Natural killer cell (primary cell): ENCODE measurements at regions of chr6 and their contacts with region 1.

Region 1: DNA sequence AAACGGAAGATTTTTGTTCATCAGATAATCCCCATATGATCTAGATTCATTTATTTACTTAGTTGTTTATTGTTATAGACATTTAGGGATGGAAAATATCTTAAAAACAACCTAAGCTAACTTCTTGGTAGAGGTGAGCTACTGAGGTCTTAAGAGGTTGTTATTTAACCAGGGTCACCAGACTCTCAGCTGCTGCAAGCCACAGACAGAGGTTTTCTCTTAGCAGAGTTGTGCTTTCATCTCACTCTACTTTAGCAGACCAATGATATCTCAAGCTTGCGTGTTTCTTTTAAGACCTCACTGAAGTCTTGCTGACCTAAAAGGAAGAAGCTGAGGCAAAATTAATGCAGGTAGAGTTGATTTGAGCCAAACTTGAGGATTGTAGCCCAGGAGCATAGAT is 43.6 kb downstream of the NCOA7 start:
- DNase-seq: peak in 1 of 2 donors; percentile 49
- ATAC-seq: peak; percentile 53 to 75 (median 73)
- H3K4me3 ChIP-seq: no peak overlapping the region
- H3K4me3 Mint-ChIP-seq: peak overlapping the region; percentile 63
- H3K27ac ChIP-seq: peak overlapping the region; percentile 35
- H3K27ac Mint-ChIP-seq: peak overlapping the region; percentile 87 to 94
- H3K4me1 ChIP-seq: peaks cover 31% of the 10 kb centered on the region
- H3K4me1 Mint-ChIP-seq: peaks cover 62% of the 10 kb centered on the region in 2 donors
- H3K27me3 ChIP-seq: no peaks in the 10 kb centered on the region
- H3K27me3 Mint-ChIP-seq: no peaks in the 10 kb centered on the region
- CTCF ChIP-seq: no peak

Region 2: GRCh38 chr6:124560873-124561567 is 1273.3 kb before region 1 on chr6:
- intact Hi-C with region 1: no loop called
- DNase-seq: no peak
- ATAC-seq: no peak
- H3K4me3 ChIP-seq: no peak overlapping the region
- H3K4me3 Mint-ChIP-seq: no peak overlapping the region
- H3K27ac ChIP-seq: no peak overlapping the region
- H3K27ac Mint-ChIP-seq: no peak overlapping the region
- H3K4me1 ChIP-seq: no peaks in the 10 kb centered on the region
- H3K4me1 Mint-ChIP-seq: no peaks in the 10 kb centered on the region
- H3K27me3 ChIP-seq: no peaks in the 10 kb centered on the region
- H3K27me3 Mint-ChIP-seq: no peaks in the 10 kb centered on the region
- CTCF ChIP-seq: no peak

Region 3: DNA sequence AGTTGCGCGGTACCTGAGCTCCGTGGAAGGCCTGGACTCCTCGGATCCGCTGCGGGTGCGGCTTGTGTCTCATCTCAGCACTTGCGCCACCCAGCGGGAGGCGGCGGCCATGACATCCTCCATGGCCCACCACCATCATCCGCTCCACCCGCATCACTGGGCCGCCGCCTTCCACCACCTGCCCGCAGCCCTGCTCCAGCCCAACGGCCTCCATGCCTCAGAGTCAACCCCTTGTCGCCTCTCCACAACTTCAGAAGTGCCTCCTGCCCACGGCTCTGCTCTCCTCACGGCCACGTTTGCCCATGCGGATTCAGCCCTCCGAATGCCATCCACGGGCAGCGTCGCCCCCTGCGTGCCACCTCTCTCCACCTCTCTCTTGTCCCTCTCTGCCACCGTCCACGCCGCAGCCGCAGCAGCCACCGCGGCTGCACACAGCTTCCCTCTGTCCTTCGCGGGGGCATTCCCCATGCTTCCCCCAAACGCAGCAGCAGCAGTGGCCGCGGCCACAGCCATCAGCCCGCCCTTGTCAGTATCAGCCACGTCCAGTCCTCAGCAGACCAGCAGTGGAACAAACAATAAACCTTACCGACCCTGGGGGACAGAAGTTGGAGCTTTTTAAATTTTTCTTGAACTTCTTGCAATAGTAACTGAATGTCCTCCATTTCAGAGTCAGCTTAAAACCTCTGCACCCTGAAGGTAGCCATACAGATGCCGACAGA is 75.0 kb before region 1 on chr6:
- intact Hi-C with region 1: no loop called
- DNase-seq: no peak
- ATAC-seq: peak in 2 of 3 donors; percentile 36 to 55
- H3K4me3 ChIP-seq: no peak overlapping the region
- H3K4me3 Mint-ChIP-seq: no peak overlapping the region
- H3K27ac ChIP-seq: no peak overlapping the region
- H3K27ac Mint-ChIP-seq: no peak overlapping the region
- H3K4me1 ChIP-seq: no peaks in the 10 kb centered on the region
- H3K4me1 Mint-ChIP-seq: no peaks in the 10 kb centered on the region
- H3K27me3 ChIP-seq: peaks cover 8% of the 10 kb centered on the region
- H3K27me3 Mint-ChIP-seq: peaks cover 20 to 33% of the 10 kb centered on the region in 2 donors
- CTCF ChIP-seq: no peak

Region 4: GRCh38 chr6:125790358-125791150 is 43.8 kb before region 1 on chr6 and contains the start of gene NCOA7:
- intact Hi-C with region 1: loop called (anchors 2 kb)
- DNase-seq: peak; percentile 79 to 89
- ATAC-seq: peak; percentile 83 to 92 (median 85)
- H3K4me3 ChIP-seq: peak within 1 kb of the TSS; percentile 78
- H3K4me3 Mint-ChIP-seq: peak within 1 kb of the TSS; percentile 97
- H3K27ac ChIP-seq: peak within 1 kb of the TSS; percentile 92
- H3K27ac Mint-ChIP-seq: peak within 1 kb of the TSS; percentile 93 to 98
- H3K4me1 ChIP-seq: peaks cover 18% of the 10 kb centered on the region
- H3K4me1 Mint-ChIP-seq: peaks cover 40 to 42% of the 10 kb centered on the region in 2 donors
- H3K27me3 ChIP-seq: no peaks in the 10 kb centered on the region
- H3K27me3 Mint-ChIP-seq: no peaks in the 10 kb centered on the region
- CTCF ChIP-seq: no peak
- total RNA-seq, gene NCOA7: 37.3 to 66.6 (median 56.8) TPM

Region 5: DNA sequence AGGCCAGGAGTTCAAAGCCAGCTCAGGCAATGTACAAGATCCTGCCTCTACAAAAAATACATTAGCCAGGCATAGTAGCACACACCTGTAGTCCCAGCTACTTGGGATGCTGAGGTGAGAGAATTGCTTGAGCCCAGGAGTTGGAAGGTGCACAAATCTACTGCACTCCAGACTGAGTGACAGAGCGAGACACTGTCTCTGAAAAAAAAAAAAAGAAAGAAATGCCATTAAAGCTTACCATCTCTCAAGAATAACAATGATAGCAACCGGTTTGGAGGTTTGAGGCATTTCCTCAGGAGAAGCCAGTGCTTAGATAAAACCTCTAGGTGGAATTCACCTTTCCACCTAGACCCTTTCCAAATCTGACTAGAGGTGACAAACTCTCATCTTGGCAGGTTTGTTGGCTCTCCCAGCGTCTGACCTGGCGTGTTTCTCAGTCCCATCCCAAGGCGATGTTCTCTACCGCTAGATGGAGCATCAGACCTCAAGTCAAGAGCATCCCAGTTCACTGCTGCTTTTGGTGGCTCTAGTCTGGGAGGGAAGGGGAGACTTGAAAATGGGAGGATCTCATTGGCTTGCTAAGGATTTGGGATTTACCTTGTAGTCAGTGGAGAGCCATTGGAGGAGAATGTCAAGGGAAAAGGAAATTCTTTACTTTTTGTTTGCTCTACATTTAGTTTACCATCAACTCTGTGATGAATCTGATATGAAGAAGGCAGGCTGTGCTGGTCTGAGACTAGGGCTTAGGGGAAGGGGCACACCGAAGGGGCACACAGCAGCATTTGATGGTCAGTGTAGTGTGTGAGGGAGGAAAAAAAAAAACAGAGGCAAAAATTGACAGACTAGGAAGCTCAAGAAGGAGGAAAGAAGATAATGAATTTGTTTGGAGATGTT is 24.3 kb after region 1 on chr6:
- intact Hi-C with region 1: no loop called
- DNase-seq: peak in 1 of 2 donors; percentile 59
- ATAC-seq: peak in 2 of 3 donors; percentile 60 to 74
- H3K4me3 ChIP-seq: no peak overlapping the region
- H3K4me3 Mint-ChIP-seq: no peak overlapping the region
- H3K27ac ChIP-seq: no peak overlapping the region
- H3K27ac Mint-ChIP-seq: peak overlapping the region in 1 of 2 donors; percentile 69
- H3K4me1 ChIP-seq: no peaks in the 10 kb centered on the region
- H3K4me1 Mint-ChIP-seq: peaks cover 9 to 17% of the 10 kb centered on the region in 2 donors
- H3K27me3 ChIP-seq: no peaks in the 10 kb centered on the region
- H3K27me3 Mint-ChIP-seq: no peaks in the 10 kb centered on the region
- CTCF ChIP-seq: no peak

Region 6: GRCh38 chr6:125961117-125961516 is 126.8 kb after region 1 on chr6:
- intact Hi-C with region 1: no loop called
- DNase-seq: no peak
- ATAC-seq: no peak
- H3K4me3 ChIP-seq: no peak overlapping the region
- H3K4me3 Mint-ChIP-seq: no peak overlapping the region
- H3K27ac ChIP-seq: no peak overlapping the region
- H3K27ac Mint-ChIP-seq: no peak overlapping the region
- H3K4me1 ChIP-seq: peaks cover 8% of the 10 kb centered on the region
- H3K4me1 Mint-ChIP-seq: peaks cover 20 to 24% of the 10 kb centered on the region in 2 donors
- H3K27me3 ChIP-seq: no peaks in the 10 kb centered on the region
- H3K27me3 Mint-ChIP-seq: no peaks in the 10 kb centered on the region
- CTCF ChIP-seq: no peak